H1 (cell line): ENCODE measurements at regions of chr6 and their contacts with region 1.

Region 1: GRCh38 chr6:137094411-137095008 is 49.7 kb upstream of the IL20RA start:
- DNase-seq: peak in 1 of 2 experiments; percentile 65
- H3K4me3 ChIP-seq: no peak overlapping the region
- H3K27ac ChIP-seq: no peak overlapping the region
- H3K4me1 ChIP-seq: peaks cover 0 to 3% (median 0%) of the 10 kb centered on the region in 4 experiments; a peak in 3 of 7 replicates
- H3K27me3 ChIP-seq: no peaks in the 10 kb centered on the region
- CTCF ChIP-seq: peak in 2 of 3 experiments; percentile 71 to 75; a peak in 3 of 4 replicates
- EP300 ChIP-seq: no peak
- POLR2A ChIP-seq: no peak
- RAD21 ChIP-seq: peak; percentile 91 to 92

Region 2: GRCh38 chr6:136945711-136946121 is 148.8 kb before region 1 on chr6:
- CTCF ChIA-PET with region 1: no interaction called
- POLR2A ChIA-PET with region 1: no interaction called
- DNase-seq: no peak
- H3K4me3 ChIP-seq: no peak overlapping the region
- H3K27ac ChIP-seq: no peak overlapping the region
- H3K4me1 ChIP-seq: no peaks in the 10 kb centered on the region; a peak in 1 of 7 replicates
- H3K27me3 ChIP-seq: no peaks in the 10 kb centered on the region
- CTCF ChIP-seq: no peak
- EP300 ChIP-seq: no peak
- POLR2A ChIP-seq: no peak
- RAD21 ChIP-seq: no peak

Region 3: GRCh38 chr6:137076277-137077068 is 18.0 kb before region 1 on chr6:
- CTCF ChIA-PET with region 1: interaction called, 22 read pairs
- POLR2A ChIA-PET with region 1: no interaction called
- DNase-seq: peak; percentile 56 to 75
- H3K4me3 ChIP-seq: no peak overlapping the region
- H3K27ac ChIP-seq: no peak overlapping the region
- H3K4me1 ChIP-seq: peaks cover 0 to 6% (median under 1%) of the 10 kb centered on the region in 4 experiments; a peak in 2 of 7 replicates
- H3K27me3 ChIP-seq: no peaks in the 10 kb centered on the region
- CTCF ChIP-seq: peak; percentile 85 to 98 (median 97)
- EP300 ChIP-seq: no peak
- POLR2A ChIP-seq: no peak
- RAD21 ChIP-seq: peak; percentile 94

Region 4: GRCh38 chr6:137133122-137133521 is 38.6 kb after region 1 on chr6:
- CTCF ChIA-PET with region 1: interaction called, 17 read pairs
- POLR2A ChIA-PET with region 1: no interaction called
- DNase-seq: peak in 1 of 2 experiments; percentile 7
- H3K4me3 ChIP-seq: no peak overlapping the region
- H3K27ac ChIP-seq: no peak overlapping the region
- H3K4me1 ChIP-seq: no peaks in the 10 kb centered on the region
- H3K27me3 ChIP-seq: no peaks in the 10 kb centered on the region
- CTCF ChIP-seq: peak; percentile 24 to 41 (median 34); a peak in 2 of 4 replicates
- EP300 ChIP-seq: no peak
- POLR2A ChIP-seq: no peak
- RAD21 ChIP-seq: peak in 1 of 2 experiments; percentile 26; a peak in 1 of 4 replicates